Breast epithelium (tissue), 4 donors: ENCODE measurements at regions of chr2 and their contacts with region 1.

Region 1: GRCh38 chr2:216328347-216328746 is 43.9 kb downstream of the MARCHF4 start:
- DNase-seq: no peak
- H3K4me3 ChIP-seq: no peak overlapping the region
- H3K27ac ChIP-seq: no peak overlapping the region
- H3K4me1 ChIP-seq: no peaks in the 10 kb centered on the region
- H3K27me3 ChIP-seq: no peaks in the 10 kb centered on the region
- CTCF ChIP-seq: no peak
- POLR2A ChIP-seq: no peak

Region 2: GRCh38 chr2:216285482-216286100 is 42.8 kb before region 1 on chr2:
- intact Hi-C with region 1: loop called (anchors 2 kb)
- DNase-seq: no peak
- H3K4me3 ChIP-seq: no peak overlapping the region
- H3K27ac ChIP-seq: no peak overlapping the region
- H3K4me1 ChIP-seq: no peaks in the 10 kb centered on the region
- H3K27me3 ChIP-seq: no peaks in the 10 kb centered on the region
- CTCF ChIP-seq: no peak
- POLR2A ChIP-seq: no peak